MCF 10A (cell line): ENCODE measurements at regions of chr7 and their contacts with region 1.

Region 1: DNA sequence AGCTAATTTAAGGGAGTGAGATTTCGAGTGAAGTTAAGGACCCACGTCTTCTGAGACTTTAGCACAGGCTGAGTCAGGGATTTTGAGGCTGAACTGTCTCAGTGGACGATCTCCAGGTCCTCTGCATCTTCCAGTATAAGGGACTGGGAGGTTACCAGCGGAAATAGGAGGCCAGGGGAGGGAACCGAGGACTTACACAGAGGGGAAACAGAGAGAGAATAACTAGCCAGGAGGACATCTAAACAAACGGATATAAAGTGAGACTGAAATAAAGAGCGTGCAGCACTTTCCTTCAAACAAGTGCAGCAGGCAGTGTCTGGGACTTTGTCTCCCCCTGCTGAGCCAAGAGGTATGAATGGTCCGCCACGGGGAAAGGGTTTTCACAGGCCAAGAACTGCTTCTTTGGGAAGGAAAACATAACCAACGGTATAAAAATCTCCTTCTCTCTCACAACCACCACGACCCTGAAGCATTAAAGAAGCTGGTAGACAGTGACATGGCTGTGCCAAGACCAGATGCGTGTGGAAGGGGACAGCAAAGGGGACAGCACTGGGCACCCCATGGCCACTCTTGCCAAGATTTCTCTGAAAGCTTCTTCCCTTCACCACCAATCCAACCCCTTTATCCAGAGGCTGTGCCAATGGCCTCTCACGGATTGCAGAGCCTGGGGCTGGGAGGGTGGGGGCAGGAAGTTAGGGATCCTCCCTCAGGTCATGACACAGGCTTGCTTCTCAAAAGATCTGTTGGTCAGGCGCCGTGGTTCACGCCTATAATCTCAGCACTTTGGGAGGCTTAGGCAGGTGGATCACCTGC is 72.0 kb downstream of the SLC37A3 start:
- DNase-seq: peak; percentile 72
- H3K4me3 Mint-ChIP-seq: no peak overlapping the region
- H3K27ac Mint-ChIP-seq: no peak overlapping the region
- H3K4me1 Mint-ChIP-seq: no peaks in the 10 kb centered on the region
- H3K27me3 Mint-ChIP-seq: no peaks in the 10 kb centered on the region
- CTCF ChIP-seq: peak; percentile 78

Region 2: DNA sequence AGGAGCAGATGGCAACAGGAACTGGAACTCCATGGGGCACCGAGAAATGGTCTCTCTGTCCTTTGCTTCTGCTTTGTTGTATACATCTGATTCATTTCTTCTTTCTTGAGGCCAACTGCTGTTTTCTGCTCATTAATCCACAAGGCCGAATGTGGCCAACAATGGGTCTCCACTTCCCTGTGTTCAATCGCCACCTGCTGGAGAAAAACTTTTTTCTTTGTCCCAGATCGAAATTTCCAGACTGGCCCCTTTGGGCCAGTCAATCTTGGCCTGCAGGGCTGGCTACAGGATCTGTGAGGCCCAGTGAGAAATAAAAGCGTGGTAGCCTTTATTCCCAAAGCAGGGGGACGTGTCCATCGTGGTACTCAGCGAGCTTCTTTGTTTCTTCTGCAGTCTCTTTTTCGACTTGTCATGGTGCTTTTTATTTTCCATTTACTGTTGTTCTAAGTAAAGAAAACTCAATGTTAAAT is 322.4 kb before region 1 on chr7:
- CTCF ChIA-PET with region 1: interaction called, 3 read pairs
- POLR2A ChIA-PET with region 1: no interaction called
- intact Hi-C with region 1: loop called (anchors 1 kb)
- DNase-seq: peak; percentile 80
- H3K4me3 Mint-ChIP-seq: no peak overlapping the region
- H3K27ac Mint-ChIP-seq: no peak overlapping the region
- H3K4me1 Mint-ChIP-seq: no peaks in the 10 kb centered on the region
- H3K27me3 Mint-ChIP-seq: no peaks in the 10 kb centered on the region
- CTCF ChIP-seq: peak; percentile 56

Region 3: DNA sequence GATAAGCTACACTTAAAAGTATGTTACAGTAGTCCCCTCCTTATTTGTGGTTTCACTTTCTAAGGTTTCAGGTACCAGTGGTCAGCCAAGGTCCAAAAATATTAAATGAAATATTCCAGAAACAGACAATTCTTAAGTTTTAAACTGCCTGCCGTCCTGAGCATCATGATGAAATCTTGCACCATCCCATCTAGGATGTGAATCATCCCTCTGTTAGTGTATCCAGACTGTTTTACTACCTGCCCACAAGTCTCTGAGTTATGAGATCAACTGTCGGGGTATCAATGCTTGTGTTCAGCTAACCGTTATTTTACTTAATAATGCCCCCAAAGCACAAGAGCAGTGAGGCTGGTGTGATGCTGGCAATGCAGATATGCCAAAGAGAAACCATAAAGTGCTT is 160.9 kb before region 1 on chr7:
- CTCF ChIA-PET with region 1: interaction called, 11 read pairs
- POLR2A ChIA-PET with region 1: interaction called, 4 read pairs
- intact Hi-C with region 1: no loop called
- DNase-seq: peak; percentile 78
- H3K4me3 Mint-ChIP-seq: no peak overlapping the region
- H3K27ac Mint-ChIP-seq: peak overlapping the region; percentile 74
- H3K4me1 Mint-ChIP-seq: peaks cover 8% of the 10 kb centered on the region
- H3K27me3 Mint-ChIP-seq: no peaks in the 10 kb centered on the region
- CTCF ChIP-seq: no peak

Region 4: DNA sequence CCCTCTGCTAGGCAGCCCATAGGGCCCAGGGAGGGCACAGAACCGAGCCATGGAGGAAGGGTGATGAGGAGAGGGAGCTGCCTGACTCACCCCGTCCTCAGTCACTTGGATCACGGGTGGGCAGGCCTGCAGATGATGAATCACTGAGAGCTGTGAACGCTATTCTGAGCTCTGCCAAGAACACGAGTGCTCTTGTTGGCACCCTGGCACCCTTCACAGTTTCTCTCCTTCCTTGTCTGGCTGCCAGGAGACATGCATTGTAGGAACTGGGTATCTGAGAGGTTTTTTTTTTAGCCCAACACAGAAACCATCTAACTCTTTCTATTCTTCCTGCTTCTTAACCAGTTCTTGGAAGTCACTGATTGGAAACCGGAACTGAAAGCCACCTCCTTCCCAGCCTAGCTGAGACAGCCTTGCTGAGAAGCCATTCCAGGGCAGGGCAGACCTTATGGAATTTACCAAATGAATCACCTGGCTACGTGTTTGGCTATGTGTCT is 10.1 kb before region 1 on chr7:
- CTCF ChIA-PET with region 1: interaction called, 22 read pairs
- POLR2A ChIA-PET with region 1: interaction called, 3 read pairs
- intact Hi-C with region 1: no loop called
- DNase-seq: peak; percentile 80
- H3K4me3 Mint-ChIP-seq: peak overlapping the region; percentile 71
- H3K27ac Mint-ChIP-seq: peak overlapping the region; percentile 95
- H3K4me1 Mint-ChIP-seq: peaks cover 32% of the 10 kb centered on the region
- H3K27me3 Mint-ChIP-seq: no peaks in the 10 kb centered on the region
- CTCF ChIP-seq: no peak

Region 5: GRCh38 chr7:140342727-140343514 is 16.6 kb after region 1 on chr7:
- CTCF ChIA-PET with region 1: interaction called, 11 read pairs
- POLR2A ChIA-PET with region 1: interaction called, 3 read pairs
- intact Hi-C with region 1: no loop called
- DNase-seq: peak; percentile 25
- H3K4me3 Mint-ChIP-seq: no peak overlapping the region
- H3K27ac Mint-ChIP-seq: no peak overlapping the region
- H3K4me1 Mint-ChIP-seq: no peaks in the 10 kb centered on the region
- H3K27me3 Mint-ChIP-seq: no peaks in the 10 kb centered on the region
- CTCF ChIP-seq: peak; percentile 20

Region 6: DNA sequence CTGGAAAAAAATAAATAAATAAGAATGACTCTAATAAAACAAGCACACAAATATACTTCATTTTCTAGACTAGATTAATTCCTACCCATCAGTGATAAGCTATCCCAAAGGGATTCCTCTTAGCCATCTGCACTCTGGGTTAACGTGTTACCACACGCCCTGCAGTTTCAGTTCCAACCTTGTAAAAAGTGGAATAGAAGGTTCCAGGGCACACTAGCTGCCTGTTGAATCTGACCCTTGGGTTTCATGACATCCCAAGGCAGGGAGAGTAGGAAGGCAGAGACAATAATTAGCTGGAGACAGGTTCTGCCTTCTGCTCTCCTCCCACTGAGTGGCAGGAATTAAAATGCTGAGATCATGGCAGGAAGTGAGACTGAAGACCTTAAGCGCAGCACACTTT is 38.5 kb after region 1 on chr7:
- CTCF ChIA-PET with region 1: no interaction called
- POLR2A ChIA-PET with region 1: no interaction called
- intact Hi-C with region 1: no loop called
- DNase-seq: peak; percentile 46
- H3K4me3 Mint-ChIP-seq: no peak overlapping the region
- H3K27ac Mint-ChIP-seq: no peak overlapping the region
- H3K4me1 Mint-ChIP-seq: no peaks in the 10 kb centered on the region
- H3K27me3 Mint-ChIP-seq: no peaks in the 10 kb centered on the region
- CTCF ChIP-seq: no peak